T-cell (primary cell): ENCODE measurements at regions of chr10 and their contacts with region 1.

Region 1: DNA sequence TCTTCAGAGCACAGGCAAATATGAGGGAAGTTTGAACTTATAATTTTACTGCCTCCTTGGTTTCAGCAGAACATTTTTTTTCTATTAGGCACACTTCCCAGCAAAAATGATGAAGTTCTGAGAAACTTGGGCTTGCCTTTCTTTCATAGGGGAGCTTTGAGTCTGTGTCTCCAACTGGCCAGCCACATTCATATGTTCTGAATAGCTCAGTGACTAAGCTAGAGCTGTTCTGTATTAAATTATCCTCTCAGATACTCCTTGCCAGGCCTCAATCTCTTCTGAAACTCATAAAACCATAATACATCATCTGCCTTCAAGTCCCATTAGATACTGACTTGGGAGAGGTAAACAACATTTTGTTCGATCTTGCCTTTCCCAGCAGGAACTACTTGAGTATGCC is 476.5 kb downstream of the GPAM start:
- DNase-seq: no peak
- ATAC-seq: no peak
- H3K4me3 ChIP-seq: no peak overlapping the region
- H3K4me3 Mint-ChIP-seq: no peak overlapping the region
- H3K27ac ChIP-seq: no peak overlapping the region
- H3K27ac Mint-ChIP-seq: no peak overlapping the region
- H3K4me1 ChIP-seq: no peaks in the 10 kb centered on the region
- H3K4me1 Mint-ChIP-seq: no peaks in the 10 kb centered on the region
- H3K27me3 ChIP-seq: no peaks in the 10 kb centered on the region
- H3K27me3 Mint-ChIP-seq: no peaks in the 10 kb centered on the region

Region 2: GRCh38 chr10:111186358-111186757 is 520.7 kb before region 1 on chr10:
- CTCF ChIA-PET with region 1: no interaction called
- POLR2A ChIA-PET with region 1: no interaction called
- DNase-seq: no peak
- ATAC-seq: no peak
- H3K4me3 ChIP-seq: no peak overlapping the region
- H3K4me3 Mint-ChIP-seq: no peak overlapping the region
- H3K27ac ChIP-seq: no peak overlapping the region
- H3K27ac Mint-ChIP-seq: no peak overlapping the region
- H3K4me1 ChIP-seq: no peaks in the 10 kb centered on the region
- H3K4me1 Mint-ChIP-seq: no peaks in the 10 kb centered on the region
- H3K27me3 ChIP-seq: peaks cover 3 to 4% of the 10 kb centered on the region in 2 experiments
- H3K27me3 Mint-ChIP-seq: peaks cover 5 to 7% of the 10 kb centered on the region in 2 donors

Region 3: GRCh38 chr10:111865550-111865949 is 158.5 kb after region 1 on chr10:
- CTCF ChIA-PET with region 1: no interaction called
- POLR2A ChIA-PET with region 1: interaction called in 1 of 2 experiments, 15 read pairs
- DNase-seq: no peak
- ATAC-seq: no peak
- H3K4me3 ChIP-seq: no peak overlapping the region
- H3K4me3 Mint-ChIP-seq: no peak overlapping the region
- H3K27ac ChIP-seq: no peak overlapping the region
- H3K27ac Mint-ChIP-seq: no peak overlapping the region
- H3K4me1 ChIP-seq: no peaks in the 10 kb centered on the region
- H3K4me1 Mint-ChIP-seq: no peaks in the 10 kb centered on the region
- H3K27me3 ChIP-seq: no peaks in the 10 kb centered on the region
- H3K27me3 Mint-ChIP-seq: no peaks in the 10 kb centered on the region